Colonic mucosa (tissue), 4 donors: ENCODE measurements at regions of chr4 and their contacts with region 1.

Region 1: DNA sequence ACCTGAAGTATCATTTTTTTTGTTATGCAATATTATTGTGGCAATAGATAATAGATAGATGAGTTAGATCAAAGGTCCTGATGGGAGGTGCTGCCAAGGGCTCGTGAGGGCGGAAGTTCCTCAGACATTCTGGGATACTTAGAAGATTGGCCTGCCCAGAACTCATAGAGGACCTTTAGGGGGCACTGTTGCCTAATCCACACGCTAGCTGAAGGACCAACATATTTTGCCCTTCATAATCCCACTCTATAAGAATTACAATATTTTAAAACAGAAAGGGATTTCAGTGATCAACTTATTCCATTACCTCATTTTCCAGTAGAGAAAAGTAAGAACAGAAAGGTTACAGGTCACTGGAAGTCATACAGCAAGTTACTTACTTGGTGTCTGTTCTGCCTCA is 22.9 kb upstream of the COX7B2 start:
- DNase-seq: peak; percentile 29
- H3K4me3 ChIP-seq: no peak overlapping the region
- H3K27ac ChIP-seq: no peak overlapping the region
- H3K4me1 ChIP-seq: no peaks in the 10 kb centered on the region
- H3K27me3 ChIP-seq: no peaks in the 10 kb centered on the region
- CTCF ChIP-seq: peak; percentile 40

Region 2: GRCh38 chr4:47032415-47033106 is 100.6 kb after region 1 on chr4:
- intact Hi-C with region 1: loop called (anchors 10 kb)
- DNase-seq: peak; percentile 52
- H3K4me3 ChIP-seq: peak overlapping the region; percentile 46
- H3K27ac ChIP-seq: no peak overlapping the region
- H3K4me1 ChIP-seq: peaks cover 3% of the 10 kb centered on the region
- H3K27me3 ChIP-seq: no peaks in the 10 kb centered on the region
- CTCF ChIP-seq: peak; percentile 57

Region 3: DNA sequence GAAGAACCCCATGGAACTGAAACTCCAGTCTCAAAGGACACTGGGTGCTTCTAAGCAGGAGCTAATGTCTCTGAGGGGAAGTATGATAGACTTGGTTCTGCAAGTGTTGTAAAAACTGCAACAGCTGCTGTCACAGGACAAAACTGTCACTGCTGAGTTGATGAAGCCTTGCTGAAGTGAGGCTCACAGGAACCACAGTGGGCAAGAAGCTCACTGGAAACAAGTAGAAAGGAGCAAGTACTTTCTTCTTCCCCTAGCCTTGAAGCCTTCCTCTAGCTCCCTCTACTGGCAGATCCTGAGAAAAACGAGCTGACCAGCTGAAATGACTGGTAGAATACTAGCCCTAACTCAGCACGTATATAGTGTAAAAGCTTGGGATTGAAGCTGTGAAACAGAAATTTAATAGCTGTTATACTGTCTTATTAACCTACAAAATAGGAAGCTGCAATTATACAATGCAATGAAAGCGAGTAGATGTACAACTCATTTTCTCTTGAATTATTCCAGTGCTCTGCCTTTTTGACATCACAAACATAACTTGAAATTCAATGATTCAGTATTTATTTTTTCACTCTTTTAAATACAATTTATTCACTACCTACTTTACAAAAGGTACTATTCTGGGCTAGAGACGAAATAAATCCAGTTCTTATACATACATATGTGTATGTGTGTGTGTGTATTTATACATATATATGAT is 190.8 kb after region 1 on chr4:
- intact Hi-C with region 1: loop called (anchors 10 kb)
- DNase-seq: peak; percentile 68
- H3K4me3 ChIP-seq: no peak overlapping the region
- H3K27ac ChIP-seq: no peak overlapping the region
- H3K4me1 ChIP-seq: no peaks in the 10 kb centered on the region
- H3K27me3 ChIP-seq: no peaks in the 10 kb centered on the region
- CTCF ChIP-seq: peak; percentile 62